ENCODE measurements at regions of chr12 and their contacts with region 1.

Region 1: DNA sequence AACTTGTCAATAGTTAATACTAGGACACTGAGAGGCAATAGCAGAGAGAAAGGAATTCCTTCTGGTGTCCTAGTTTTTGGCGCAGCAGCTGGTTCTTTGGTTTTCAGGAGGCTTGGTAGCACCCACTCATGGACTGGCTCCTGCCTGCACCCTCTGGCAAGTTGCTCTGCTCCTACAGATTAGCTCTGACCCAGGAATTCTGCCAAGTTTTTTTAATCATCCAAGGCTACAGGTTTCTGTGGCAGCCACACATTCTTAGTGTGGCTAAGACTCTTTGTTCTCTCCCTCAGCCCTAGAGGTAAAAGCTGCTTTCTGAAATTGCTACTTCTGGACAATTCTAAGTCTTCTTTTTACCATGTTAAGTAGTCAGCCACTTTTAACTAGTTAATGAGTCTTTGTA is 72.0 kb upstream of the FKBP4 start:
- DNase-seq: no peak
- H3K4me3 ChIP-seq: no peak overlapping the region
- H3K4me3 Mint-ChIP-seq: no peak overlapping the region
- H3K27ac ChIP-seq: no peak overlapping the region
- H3K27ac Mint-ChIP-seq: no peak overlapping the region
- H3K4me1 ChIP-seq: no peaks in the 10 kb centered on the region
- H3K4me1 Mint-ChIP-seq: no peaks in the 10 kb centered on the region
- H3K27me3 ChIP-seq: no peaks in the 10 kb centered on the region
- H3K27me3 Mint-ChIP-seq: peaks cover 2 to 18% of the 10 kb centered on the region in 2 donors

Region 2: DNA sequence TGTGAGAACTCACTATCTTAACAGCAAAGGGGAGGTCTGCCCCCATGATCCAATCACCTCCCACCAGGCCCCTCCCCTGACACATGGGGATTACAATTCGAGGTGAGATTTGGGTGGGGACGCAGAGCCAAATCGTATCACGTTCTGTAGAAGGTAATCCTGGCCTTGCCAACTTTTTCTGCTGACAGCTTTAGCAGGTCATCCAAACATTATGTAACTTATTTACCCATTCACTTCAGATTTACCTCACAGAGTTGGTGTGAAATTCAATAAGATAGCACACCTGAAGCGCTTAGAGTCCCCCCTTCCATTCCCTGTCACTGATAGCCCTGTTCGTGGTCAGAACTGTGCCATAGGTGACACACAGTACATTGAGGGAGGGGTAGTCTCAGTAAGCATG is 1347.5 kb before region 1 on chr12:
- CTCF ChIA-PET with region 1: no interaction called
- POLR2A ChIA-PET with region 1: interaction called, 14 read pairs
- DNase-seq: no peak
- H3K4me3 ChIP-seq: no peak overlapping the region
- H3K4me3 Mint-ChIP-seq: no peak overlapping the region
- H3K27ac ChIP-seq: no peak overlapping the region
- H3K27ac Mint-ChIP-seq: no peak overlapping the region
- H3K4me1 ChIP-seq: no peaks in the 10 kb centered on the region
- H3K4me1 Mint-ChIP-seq: no peaks in the 10 kb centered on the region
- H3K27me3 ChIP-seq: no peaks in the 10 kb centered on the region
- H3K27me3 Mint-ChIP-seq: no peaks in the 10 kb centered on the region

Region 3: GRCh38 chr12:2673966-2674810 is 48.6 kb before region 1 on chr12:
- CTCF ChIA-PET with region 1: no interaction called
- POLR2A ChIA-PET with region 1: no interaction called
- DNase-seq: no peak
- H3K4me3 ChIP-seq: no peak overlapping the region
- H3K4me3 Mint-ChIP-seq: no peak overlapping the region
- H3K27ac ChIP-seq: no peak overlapping the region
- H3K27ac Mint-ChIP-seq: no peak overlapping the region
- H3K4me1 ChIP-seq: no peaks in the 10 kb centered on the region
- H3K4me1 Mint-ChIP-seq: no peaks in the 10 kb centered on the region
- H3K27me3 ChIP-seq: no peaks in the 10 kb centered on the region
- H3K27me3 Mint-ChIP-seq: no peaks in the 10 kb centered on the region